Left ventricle myocardium inferior (tissue), 1 donor: ENCODE measurements at regions of chr11 and their contacts with region 1.

Region 1: DNA sequence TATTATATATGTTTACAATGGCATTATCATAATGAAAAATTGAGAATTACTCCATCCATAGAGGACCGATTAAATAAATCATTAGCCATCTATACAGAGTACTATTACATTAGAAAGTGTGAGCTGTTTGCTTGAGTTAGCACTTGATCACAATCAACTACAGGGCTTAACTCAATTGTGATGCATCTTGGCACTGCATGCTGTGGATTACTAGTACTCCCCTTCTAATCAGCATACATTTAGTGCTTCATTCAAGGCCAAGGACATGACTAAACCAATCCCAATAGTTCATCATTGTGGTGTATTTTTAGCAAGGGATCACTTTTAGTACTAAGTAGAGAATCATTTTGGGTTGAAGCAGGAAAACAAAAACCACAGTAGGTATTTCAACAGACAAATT is 23.5 kb upstream of the ARHGAP42 start:
- DNase-seq: no peak
- H3K4me3 ChIP-seq: no peak overlapping the region
- H3K27ac ChIP-seq: no peak overlapping the region
- H3K4me1 ChIP-seq: no peaks in the 10 kb centered on the region
- H3K27me3 ChIP-seq: no peaks in the 10 kb centered on the region
- CTCF ChIP-seq: no peak

Region 2: DNA sequence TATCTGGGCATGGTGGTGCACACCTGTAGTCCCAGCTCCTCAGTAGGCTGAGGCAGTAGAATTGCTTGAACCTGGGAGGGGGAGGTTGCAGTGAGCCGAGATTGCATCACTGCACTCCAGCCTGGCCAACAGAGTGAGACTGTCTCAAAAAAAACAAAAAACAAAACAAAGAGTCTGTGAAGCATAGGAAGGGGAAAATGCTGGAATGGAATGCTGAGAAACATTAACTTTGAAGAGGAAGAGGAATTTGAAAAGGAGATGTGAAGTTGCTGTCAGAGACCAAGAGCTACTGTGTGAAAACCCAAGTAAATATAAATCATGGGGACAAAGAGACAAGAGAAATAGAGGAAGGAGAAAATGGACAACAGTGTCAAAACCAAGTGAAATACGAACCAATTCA is 431.6 kb before region 1 on chr11:
- intact Hi-C with region 1: no loop called
- DNase-seq: no peak
- H3K4me3 ChIP-seq: no peak overlapping the region
- H3K27ac ChIP-seq: no peak overlapping the region
- H3K4me1 ChIP-seq: no peaks in the 10 kb centered on the region
- H3K27me3 ChIP-seq: no peaks in the 10 kb centered on the region
- CTCF ChIP-seq: no peak

Region 3: GRCh38 chr11:100602716-100603115 is 60.9 kb before region 1 on chr11:
- intact Hi-C with region 1: loop called (anchors 10 kb)
- DNase-seq: no peak
- H3K4me3 ChIP-seq: no peak overlapping the region
- H3K27ac ChIP-seq: no peak overlapping the region
- H3K4me1 ChIP-seq: no peaks in the 10 kb centered on the region
- H3K27me3 ChIP-seq: no peaks in the 10 kb centered on the region
- CTCF ChIP-seq: no peak

Region 4: DNA sequence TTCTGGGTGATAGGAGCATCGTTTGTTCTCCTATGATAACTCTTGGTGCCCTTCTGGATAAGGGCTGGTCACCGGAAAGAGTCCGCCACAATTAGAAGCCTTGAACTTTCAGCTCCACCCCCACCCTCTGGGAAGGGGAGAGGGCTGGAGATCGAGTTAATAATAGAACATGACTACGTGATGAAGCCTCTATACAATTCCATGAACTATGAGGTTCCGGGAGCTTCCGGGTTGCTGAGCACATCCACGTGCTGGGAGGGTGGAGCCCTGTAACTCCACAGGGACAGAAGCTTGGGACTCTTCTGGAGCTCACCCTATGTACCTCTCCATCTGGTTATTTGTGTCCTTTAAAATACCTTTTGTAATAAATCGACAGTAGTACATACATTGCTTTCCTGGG is 63.8 kb after region 1 on chr11:
- intact Hi-C with region 1: no loop called
- DNase-seq: peak; percentile 52
- H3K4me3 ChIP-seq: peak overlapping the region; percentile 29
- H3K27ac ChIP-seq: peak overlapping the region; percentile 67
- H3K4me1 ChIP-seq: peaks cover 60% of the 10 kb centered on the region
- H3K27me3 ChIP-seq: no peaks in the 10 kb centered on the region
- CTCF ChIP-seq: no peak